T-cell (primary cell): ENCODE measurements at regions of chr4 and their contacts with region 1.

Region 1: DNA sequence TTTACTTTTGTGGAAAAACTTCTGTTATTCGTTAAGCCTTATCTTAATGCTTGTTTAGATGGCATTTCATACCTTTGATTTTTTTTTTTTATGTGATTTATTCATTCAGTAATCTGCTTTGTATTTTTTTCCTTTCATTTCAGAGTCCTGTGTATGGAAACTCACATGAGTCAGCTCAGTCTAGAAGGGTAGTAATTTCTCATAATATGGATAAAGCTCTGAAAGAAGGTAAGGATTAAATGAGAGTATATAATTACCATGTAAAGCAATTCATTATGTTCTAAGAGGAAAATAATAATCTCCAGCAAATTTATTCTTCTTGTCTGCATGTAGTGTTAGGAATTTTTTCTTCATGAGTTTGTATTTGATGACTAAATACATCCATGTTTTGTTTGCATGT is 37.8 kb downstream of the SNX25 start:
- DNase-seq: no peak
- ATAC-seq: no peak
- H3K4me3 ChIP-seq: no peak overlapping the region
- H3K4me3 Mint-ChIP-seq: no peak overlapping the region
- H3K27ac ChIP-seq: no peak overlapping the region
- H3K27ac Mint-ChIP-seq: no peak overlapping the region
- H3K4me1 ChIP-seq: peaks cover 0 to 2% of the 10 kb centered on the region in 2 experiments
- H3K4me1 Mint-ChIP-seq: peaks cover 15 to 26% (median 16%) of the 10 kb centered on the region in 3 donors
- H3K27me3 ChIP-seq: no peaks in the 10 kb centered on the region
- H3K27me3 Mint-ChIP-seq: no peaks in the 10 kb centered on the region

Region 2: GRCh38 chr4:183391204-183391603 is 1855.9 kb before region 1 on chr4:
- CTCF ChIA-PET with region 1: interaction called in 1 of 2 experiments, 14 read pairs
- POLR2A ChIA-PET with region 1: no interaction called
- DNase-seq: no peak
- ATAC-seq: no peak
- H3K4me3 ChIP-seq: no peak overlapping the region
- H3K4me3 Mint-ChIP-seq: no peak overlapping the region
- H3K27ac ChIP-seq: no peak overlapping the region
- H3K27ac Mint-ChIP-seq: no peak overlapping the region
- H3K4me1 ChIP-seq: peaks cover 0 to 8% of the 10 kb centered on the region in 2 experiments
- H3K4me1 Mint-ChIP-seq: peaks cover 8 to 18% (median 11%) of the 10 kb centered on the region in 3 donors
- H3K27me3 ChIP-seq: peaks cover 0 to 31% of the 10 kb centered on the region in 2 experiments
- H3K27me3 Mint-ChIP-seq: peaks cover 3 to 17% of the 10 kb centered on the region in 2 donors

Region 3: GRCh38 chr4:184913356-184914143 is 333.6 kb before region 1 on chr4:
- CTCF ChIA-PET with region 1: no interaction called
- POLR2A ChIA-PET with region 1: no interaction called
- DNase-seq: no peak
- ATAC-seq: no peak
- H3K4me3 ChIP-seq: no peak overlapping the region
- H3K4me3 Mint-ChIP-seq: no peak overlapping the region
- H3K27ac ChIP-seq: no peak overlapping the region
- H3K27ac Mint-ChIP-seq: no peak overlapping the region
- H3K4me1 ChIP-seq: no peaks in the 10 kb centered on the region
- H3K4me1 Mint-ChIP-seq: no peaks in the 10 kb centered on the region
- H3K27me3 ChIP-seq: peaks cover 0 to 17% of the 10 kb centered on the region in 2 experiments
- H3K27me3 Mint-ChIP-seq: peaks cover 21 to 30% of the 10 kb centered on the region in 2 donors